GM13976 (cell line): ENCODE measurements at regions of chr20 and their contacts with region 1.

Region 1: DNA sequence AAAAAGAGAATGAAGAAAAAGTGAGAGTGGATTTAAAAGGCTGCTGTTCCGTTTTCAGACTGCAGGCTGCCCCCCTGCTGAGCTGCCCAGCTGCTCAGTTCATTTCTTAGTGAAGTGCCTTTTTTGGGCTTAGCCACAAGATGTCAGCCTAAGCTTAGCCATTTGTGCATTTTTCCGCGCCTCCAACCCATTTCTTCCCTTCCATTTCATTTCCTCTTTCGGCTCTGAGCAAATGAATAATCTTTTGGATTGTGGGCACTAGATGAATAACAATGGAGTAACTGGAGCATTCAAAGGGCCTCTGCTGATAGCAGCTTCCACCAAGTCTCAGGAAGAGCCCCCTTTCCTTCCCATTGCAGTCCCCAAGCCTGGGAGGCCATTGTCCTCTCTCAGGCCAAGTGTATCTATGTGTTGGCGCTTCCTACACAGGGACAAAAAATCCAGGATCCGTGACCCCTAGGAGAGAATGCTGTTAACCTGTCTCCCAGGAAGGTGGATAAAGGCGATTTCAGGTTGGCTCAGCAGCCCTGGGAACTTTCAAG is 83.5 kb upstream of the SPTLC3 start:
- DNase-seq: peak; percentile 61
- CTCF ChIP-seq: peak; percentile 77

Region 2: DNA sequence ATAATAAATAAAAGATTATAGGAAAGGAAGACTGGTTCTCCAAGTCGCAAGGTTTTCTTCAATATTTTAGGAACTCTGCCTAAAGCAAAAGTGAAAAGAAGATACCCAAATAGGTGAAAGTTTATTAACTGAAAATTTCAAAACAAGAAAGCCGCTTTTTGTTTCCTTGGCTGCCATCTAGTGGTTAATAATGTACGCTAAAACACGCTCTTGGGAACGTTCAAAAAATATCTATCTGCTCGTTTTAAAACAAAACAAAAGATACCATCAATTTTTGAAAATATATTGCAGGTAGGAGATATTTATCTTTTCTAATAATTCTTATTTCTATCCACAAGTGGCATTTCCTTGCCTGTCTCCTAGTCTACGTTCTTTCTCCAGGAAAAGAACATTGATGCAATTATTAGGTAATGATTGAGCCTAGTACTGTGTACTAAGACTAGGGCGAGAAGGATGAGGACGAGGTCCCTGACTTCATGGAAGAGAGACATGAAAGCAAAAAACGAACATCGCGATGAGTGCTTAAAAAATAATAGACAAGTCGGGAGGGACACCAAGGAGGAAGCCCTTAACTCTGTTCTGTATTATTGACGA is 180.7 kb after region 1 on chr20:
- in situ Hi-C with region 1: loop called (anchors 10 kb)
- DNase-seq: peak; percentile 23
- CTCF ChIP-seq: peak; percentile 32